Activated CD8-positive, alpha-beta T cell treated with anti-CD3 and anti-CD28 coated beads for 36 hours (primary cell): ENCODE measurements at regions of chr6 and their contacts with region 1.

Region 1: DNA sequence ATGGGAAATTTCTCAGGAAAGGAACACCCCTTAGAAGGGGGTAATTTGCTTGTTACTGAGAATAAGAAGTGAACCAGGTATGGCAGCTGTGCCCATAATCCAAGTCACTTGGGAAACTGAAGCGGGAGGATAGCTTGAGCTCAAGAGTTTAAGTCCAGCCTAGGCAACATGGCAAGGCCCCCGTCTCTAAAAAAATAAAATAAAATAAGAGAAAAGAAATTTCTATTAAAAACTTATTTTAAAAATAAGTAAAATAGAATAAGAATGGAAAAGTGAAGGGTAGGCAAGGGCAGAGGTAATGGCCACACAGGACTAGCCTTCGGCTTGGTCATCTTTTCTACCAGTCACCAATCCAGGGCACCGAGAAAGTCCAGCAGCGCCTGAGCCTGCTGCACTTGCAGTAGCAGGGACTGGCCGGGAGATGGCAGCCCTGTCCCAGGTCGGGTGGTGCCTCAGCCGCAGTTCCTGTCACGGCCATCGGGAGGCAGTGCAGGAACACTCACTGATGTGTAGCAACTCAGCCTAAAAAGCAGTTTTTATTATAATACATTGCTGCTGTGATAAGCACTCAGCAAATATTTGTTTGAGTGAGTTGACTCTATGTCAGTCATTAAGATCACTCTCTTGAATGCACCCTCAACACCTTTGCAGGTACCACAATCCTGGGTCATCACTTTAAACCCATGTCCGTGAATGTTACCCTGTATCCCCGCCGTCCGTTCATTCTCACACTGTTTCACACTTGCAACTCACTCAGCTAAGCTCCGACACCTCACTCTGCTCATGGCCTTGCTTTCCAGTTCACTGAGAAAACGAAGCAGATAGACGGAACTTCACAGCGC is 23.2 kb upstream of the GCM1 start:
- DNase-seq: peak; percentile 92
- ATAC-seq: peak; percentile 100
- H3K4me3 Mint-ChIP-seq: no peak overlapping the region
- H3K27ac Mint-ChIP-seq: no peak overlapping the region
- H3K4me1 Mint-ChIP-seq: no peaks in the 10 kb centered on the region
- H3K27me3 Mint-ChIP-seq: no peaks in the 10 kb centered on the region
- CTCF ChIP-seq: peak; percentile 100

Region 2: DNA sequence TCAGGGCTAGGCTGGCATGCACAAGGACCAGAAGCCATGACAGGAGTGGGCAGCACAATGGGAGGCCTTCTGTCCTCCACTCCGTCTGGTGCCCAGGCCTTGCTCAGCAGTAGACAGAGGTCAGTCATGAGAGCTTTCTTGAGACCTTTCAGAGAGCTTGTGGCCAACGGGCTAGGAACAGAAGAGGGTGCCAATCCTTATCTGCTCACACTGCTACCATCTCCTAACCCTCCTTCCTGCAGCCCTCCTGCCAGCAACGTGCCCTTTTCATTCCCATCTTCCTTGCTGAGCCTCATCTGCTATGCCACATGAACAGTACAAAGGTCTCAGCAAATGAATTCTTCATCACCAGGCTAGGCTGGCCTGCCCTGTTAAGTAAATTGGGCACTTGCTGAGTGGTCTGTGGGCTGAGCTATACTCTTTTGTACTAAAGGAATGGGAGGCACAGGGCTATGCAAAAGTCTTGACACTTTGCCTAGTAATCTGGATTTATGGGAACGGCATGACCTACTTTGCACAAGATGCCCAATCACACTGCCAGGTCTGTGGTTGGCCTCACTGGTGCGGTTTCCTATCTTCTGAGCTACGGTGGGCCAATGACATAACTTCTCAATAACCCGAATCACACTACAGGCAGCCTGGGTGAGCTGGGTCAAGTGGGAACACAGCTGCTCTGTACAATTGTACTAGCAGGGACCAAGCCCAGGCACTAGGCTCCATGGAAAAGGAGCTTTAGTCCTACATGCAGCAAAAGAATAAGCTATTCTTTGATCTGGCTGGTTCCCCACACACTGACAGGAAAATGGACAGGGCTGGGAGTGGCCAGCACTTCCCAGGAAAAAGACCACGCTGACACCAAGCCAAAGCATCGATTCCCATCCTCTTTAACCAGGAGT is 129.1 kb after region 1 on chr6:
- CTCF ChIA-PET with region 1: interaction called, 11 read pairs
- POLR2A ChIA-PET with region 1: no interaction called
- intact Hi-C with region 1: no loop called
- DNase-seq: peak; percentile 38
- ATAC-seq: peak; percentile 26
- H3K4me3 Mint-ChIP-seq: no peak overlapping the region
- H3K27ac Mint-ChIP-seq: peak overlapping the region; percentile 36
- H3K4me1 Mint-ChIP-seq: peaks cover 73% of the 10 kb centered on the region
- H3K27me3 Mint-ChIP-seq: no peaks in the 10 kb centered on the region
- CTCF ChIP-seq: no peak

Region 3: DNA sequence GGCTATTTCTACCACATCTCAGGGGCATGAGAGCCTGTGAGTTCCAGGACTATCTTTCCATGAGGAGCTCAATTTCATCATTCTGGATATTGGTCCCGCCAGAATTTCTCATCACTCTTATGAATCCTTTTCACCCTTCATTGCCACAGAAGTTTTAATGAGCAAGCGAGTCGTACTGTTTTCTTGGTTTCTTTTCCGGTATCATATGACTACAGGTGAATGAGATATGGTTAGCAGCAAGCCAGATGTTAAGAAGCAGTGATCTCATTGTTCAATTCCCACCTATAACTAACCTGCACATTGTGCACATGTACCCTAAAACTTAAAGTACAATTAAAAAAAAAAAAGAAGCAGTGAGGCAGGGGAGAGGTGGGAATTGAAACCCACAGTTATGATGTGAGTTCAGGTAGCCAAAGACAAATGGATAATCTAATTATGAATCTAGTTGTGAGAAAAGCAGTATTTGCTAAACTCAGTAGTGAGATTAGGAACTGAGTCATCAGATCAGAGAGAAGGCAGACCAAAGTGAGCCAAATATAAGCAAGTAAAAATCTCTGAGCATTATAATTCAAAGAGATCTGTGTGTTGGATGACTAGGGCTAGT is 254.9 kb after region 1 on chr6:
- CTCF ChIA-PET with region 1: interaction called, 11 read pairs
- POLR2A ChIA-PET with region 1: no interaction called
- intact Hi-C with region 1: no loop called
- DNase-seq: no peak
- ATAC-seq: peak; percentile 87
- H3K4me3 Mint-ChIP-seq: no peak overlapping the region
- H3K27ac Mint-ChIP-seq: peak overlapping the region; percentile 49
- H3K4me1 Mint-ChIP-seq: peaks cover 37% of the 10 kb centered on the region
- H3K27me3 Mint-ChIP-seq: peaks cover 7% of the 10 kb centered on the region
- CTCF ChIP-seq: no peak

Region 4: DNA sequence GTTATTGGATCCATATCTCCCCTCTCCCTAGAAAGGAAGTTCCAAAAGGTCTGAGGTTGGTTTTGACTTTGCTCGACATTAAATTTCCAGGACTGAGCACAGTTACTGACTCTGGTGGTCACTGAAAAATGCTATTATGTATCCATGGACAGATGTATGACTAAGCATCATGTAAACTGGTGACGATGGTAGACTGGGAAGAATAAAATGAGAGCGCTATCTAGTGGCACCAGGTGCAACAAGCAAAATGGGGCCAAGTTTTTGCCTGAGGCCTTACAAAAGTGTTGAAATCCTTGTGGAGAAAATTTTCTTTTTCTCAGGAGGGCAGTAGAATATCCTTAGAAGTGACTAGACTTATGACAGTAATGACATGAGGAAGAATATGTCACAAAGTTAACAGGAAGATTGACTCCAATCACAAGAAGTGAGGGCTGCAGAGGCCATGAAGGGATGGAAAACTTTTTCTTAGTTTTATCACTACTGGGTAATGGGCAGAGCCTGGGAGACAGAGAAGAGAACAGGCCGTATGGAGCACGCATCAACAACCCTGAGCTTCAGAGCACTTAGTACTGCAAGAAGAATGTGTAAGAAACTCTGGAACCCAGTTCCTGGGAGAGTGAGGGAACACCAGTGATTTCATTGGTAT is 265.9 kb after region 1 on chr6:
- CTCF ChIA-PET with region 1: interaction called, 20 read pairs
- POLR2A ChIA-PET with region 1: no interaction called
- intact Hi-C with region 1: loop called (anchors 5 kb)
- DNase-seq: peak; percentile 28
- ATAC-seq: peak; percentile 68
- H3K4me3 Mint-ChIP-seq: no peak overlapping the region
- H3K27ac Mint-ChIP-seq: no peak overlapping the region
- H3K4me1 Mint-ChIP-seq: peaks cover 16% of the 10 kb centered on the region
- H3K27me3 Mint-ChIP-seq: peaks cover 4% of the 10 kb centered on the region
- CTCF ChIP-seq: peak; percentile 50

Region 5: DNA sequence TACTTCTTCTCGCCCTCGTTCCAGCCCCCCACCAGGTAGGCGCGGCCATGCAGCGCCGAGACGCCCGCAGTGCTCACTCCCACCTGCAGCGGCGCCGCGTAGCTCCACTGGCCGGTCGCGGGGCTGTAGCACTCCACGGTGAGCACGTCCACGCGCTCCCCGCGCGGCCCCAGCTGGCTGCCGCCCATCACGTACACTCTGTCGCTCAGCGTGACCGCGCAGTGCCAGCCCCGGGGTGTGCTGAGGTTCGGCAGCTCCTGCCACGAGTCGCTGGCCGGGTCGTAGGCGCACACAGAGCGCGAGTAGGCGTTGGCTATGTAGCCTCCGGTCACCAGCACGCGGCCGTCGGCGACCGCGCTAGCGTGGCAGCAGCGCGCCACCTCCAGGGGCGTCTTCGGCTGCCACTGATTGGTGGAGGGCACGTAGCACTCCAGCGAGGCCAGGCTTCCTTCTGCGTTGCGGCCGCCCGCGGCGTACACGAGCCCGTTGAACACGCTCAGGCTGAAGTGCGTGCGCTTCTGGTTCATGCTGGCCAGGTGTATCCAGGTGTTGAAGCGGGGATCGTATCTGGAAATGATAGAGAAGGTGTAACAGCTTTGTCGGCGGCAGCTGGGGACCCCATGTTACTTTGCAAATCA is 480.1 kb after region 1 on chr6:
- CTCF ChIA-PET with region 1: no interaction called
- POLR2A ChIA-PET with region 1: no interaction called
- intact Hi-C with region 1: loop called (anchors 10 kb)
- DNase-seq: peak; percentile 84
- ATAC-seq: peak; percentile 92
- H3K4me3 Mint-ChIP-seq: peak overlapping the region; percentile 83
- H3K27ac Mint-ChIP-seq: peak overlapping the region; percentile 88
- H3K4me1 Mint-ChIP-seq: peaks cover 31% of the 10 kb centered on the region
- H3K27me3 Mint-ChIP-seq: no peaks in the 10 kb centered on the region
- CTCF ChIP-seq: no peak